ENCODE measurements at regions of chr9 and their contacts with region 1.

Region 1: DNA sequence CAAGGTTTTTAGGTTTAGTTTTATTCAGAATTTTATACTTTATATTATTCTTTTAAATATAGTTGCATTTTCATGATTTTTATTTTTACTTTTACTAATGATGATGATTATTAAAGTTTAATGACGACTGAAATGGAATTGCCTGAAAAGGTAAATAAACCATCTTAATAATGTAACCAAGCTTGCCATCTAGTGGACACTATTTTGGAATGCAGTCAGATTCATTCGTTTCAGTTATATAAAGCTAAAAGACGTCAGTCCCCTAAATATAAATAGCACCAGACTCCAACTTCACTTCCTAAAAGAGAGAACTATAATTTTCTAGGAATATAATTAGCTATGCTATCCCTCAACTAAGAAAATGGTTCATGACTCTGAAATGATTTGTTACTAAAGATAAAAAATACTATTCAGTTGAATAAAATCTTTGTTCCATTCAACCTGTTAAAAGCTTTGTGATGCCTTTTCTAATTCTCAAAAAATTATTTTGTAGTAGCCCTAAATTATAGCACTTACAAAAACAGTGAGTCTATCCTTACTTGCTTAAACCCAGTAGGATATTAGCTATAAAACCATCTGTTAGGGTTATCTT is 19.9 kb downstream of the ABITRAM start:
- DNase-seq: no peak
- ATAC-seq: peak; percentile 58 to 61
- H3K4me3 ChIP-seq: no peak overlapping the region
- H3K27ac ChIP-seq: no peak overlapping the region
- H3K4me1 ChIP-seq: no peaks in the 10 kb centered on the region
- H3K27me3 ChIP-seq: no peaks in the 10 kb centered on the region

Region 2: GRCh38 chr9:108687006-108687987 is 266.8 kb before region 1 on chr9:
- intact Hi-C with region 1: no loop called
- DNase-seq: no peak
- ATAC-seq: no peak
- H3K4me3 ChIP-seq: no peak overlapping the region
- H3K27ac ChIP-seq: no peak overlapping the region
- H3K4me1 ChIP-seq: no peaks in the 10 kb centered on the region
- H3K27me3 ChIP-seq: no peaks in the 10 kb centered on the region

Region 3: GRCh38 chr9:109012876-109013678 is 59.0 kb after region 1 on chr9 and contains the start of gene CTNNAL1:
- intact Hi-C with region 1: loop called in 1 of 4 experiments (anchors 10 kb)
- DNase-seq: peak; percentile 95 to 99 (median 98)
- ATAC-seq: peak; percentile 97 to 98
- H3K4me3 ChIP-seq: peak within 1 kb of the TSS; percentile 75
- H3K27ac ChIP-seq: peak within 1 kb of the TSS; percentile 97
- H3K4me1 ChIP-seq: peaks cover 2% of the 10 kb centered on the region
- H3K27me3 ChIP-seq: no peaks in the 10 kb centered on the region
- total RNA-seq, gene CTNNAL1: 61.1 to 99.9 (median 96.9) TPM

Region 4: GRCh38 chr9:109098171-109098959 is 144.3 kb after region 1 on chr9:
- intact Hi-C with region 1: no loop called
- DNase-seq: no peak
- ATAC-seq: peak; percentile 62
- H3K4me3 ChIP-seq: no peak overlapping the region
- H3K27ac ChIP-seq: peak overlapping the region; percentile 96
- H3K4me1 ChIP-seq: peaks cover 16% of the 10 kb centered on the region
- H3K27me3 ChIP-seq: no peaks in the 10 kb centered on the region

Measured in right cardiac atrium (tissue), 5 donors.